Heart left ventricle (tissue), 16 donors: ENCODE measurements at regions of chr17 and their contacts with region 1.

Region 1: DNA sequence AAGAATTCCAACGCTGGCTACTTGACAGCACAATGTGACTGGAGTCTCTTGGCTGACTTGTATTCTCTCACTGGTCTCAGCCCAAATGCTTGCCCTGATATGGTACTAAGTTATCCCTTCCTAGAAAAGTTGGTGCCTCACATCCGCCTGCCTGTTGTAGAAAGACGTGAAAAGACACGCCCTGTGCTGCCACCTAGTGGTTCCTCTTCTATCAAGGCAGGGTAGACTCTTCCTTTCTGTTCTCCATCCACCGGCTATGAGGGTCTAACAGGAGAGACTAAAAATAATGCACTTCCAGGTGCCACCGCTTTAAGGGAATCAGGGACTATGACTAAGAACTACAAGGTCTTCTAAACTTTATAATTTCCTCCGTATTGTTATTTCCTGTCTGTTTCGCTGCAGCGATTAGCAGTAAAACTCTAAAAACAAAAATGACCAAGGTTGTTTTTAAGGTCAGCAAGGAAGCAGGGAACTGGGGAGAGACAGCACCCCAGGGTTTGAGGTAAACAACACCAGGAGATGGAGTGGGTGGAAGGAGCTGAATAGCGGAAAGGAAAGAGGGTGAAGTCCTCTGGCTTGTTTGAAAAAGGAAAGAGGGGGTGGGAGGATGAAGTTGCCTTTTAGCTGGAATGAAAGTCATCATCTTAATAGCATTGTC is 109.5 kb downstream of the YPEL2 start:
- DNase-seq: peak; percentile 79 to 95 (median 91)
- ATAC-seq: peak; percentile 86 to 96 (median 92)
- H3K4me3 ChIP-seq: peak overlapping the region in 4 of 12 donors; percentile 6 to 31 (median 17)
- H3K27ac ChIP-seq: peak overlapping the region; percentile 25 to 89 (median 73)
- H3K4me1 ChIP-seq: peaks cover 0 to 57% (median 30%) of the 10 kb centered on the region in 12 donors
- H3K27me3 ChIP-seq: no peaks in the 10 kb centered on the region
- CTCF ChIP-seq: peak; percentile 77 to 95 (median 87)
- POLR2A ChIP-seq: no peak

Region 2: GRCh38 chr17:59220376-59221158 is 220.3 kb before region 1 on chr17 and contains the start of gene GDPD1:
- intact Hi-C with region 1: loop called in 1 of 10 experiments (anchors 5 kb)
- DNase-seq: peak; percentile 94 to 99 (median 96)
- ATAC-seq: peak; percentile 95 to 99 (median 98)
- H3K4me3 ChIP-seq: peak within 1 kb of the TSS; percentile 64 to 96 (median 79)
- H3K27ac ChIP-seq: peak within 1 kb of the TSS in 11 of 12 donors; percentile 26 to 80 (median 69)
- H3K4me1 ChIP-seq: peaks cover 0 to 13% (median 0%) of the 10 kb centered on the region in 12 donors
- H3K27me3 ChIP-seq: no peaks in the 10 kb centered on the region
- CTCF ChIP-seq: peak; percentile 52 to 92 (median 72)
- POLR2A ChIP-seq: peak in 1 of 2 donors; percentile 49
- total RNA-seq, gene GDPD1: 0.75 to 4.0 (median 3.0) TPM

Region 3: DNA sequence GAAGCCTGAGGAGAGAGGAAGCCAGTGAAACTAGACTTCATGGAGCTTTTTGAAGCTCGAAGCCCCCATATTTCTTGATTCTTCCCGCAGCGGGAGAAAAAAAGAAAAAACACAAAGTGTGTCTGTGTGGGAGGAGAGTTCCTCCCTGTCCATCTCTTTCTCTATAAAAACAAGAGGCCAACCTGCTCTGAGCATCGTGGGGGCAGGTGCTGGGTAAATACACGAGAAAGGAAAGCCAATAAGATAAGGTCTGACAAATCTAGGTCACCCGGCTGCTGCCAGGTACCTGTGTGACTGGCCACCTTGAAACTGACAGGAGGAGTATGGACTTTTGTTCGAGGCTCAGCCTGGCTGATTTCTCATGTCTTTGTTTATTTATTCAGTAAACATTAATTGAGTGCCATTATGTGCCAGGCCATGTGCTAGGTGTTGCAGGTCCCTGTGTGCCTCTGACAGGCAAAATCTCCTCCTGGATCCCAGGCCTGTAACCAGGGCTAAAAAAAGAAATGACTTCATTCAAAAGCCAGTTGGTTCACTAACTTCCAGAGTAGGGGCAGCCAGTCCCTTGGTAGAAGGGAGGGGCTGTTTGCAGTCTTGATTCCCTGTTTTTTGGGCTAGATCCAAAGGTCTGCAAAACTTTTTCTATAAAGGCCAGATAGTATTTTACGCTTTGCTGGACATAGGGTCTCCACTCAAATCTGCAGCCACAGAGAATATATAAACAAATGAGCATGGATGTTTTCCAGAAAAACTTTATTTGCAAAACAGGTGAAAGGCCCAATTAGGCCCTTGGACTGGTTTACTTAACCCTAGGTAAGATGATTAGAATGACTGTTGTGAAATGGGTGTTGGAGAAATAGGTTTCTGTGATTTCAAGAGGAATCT is 73.9 kb before region 1 on chr17:
- intact Hi-C with region 1: loop called in 2 of 10 experiments (anchors 1 to 5 kb)
- DNase-seq: peak in 4 of 5 donors; percentile 55 to 70 (median 59)
- ATAC-seq: peak; percentile 69 to 84 (median 73)
- H3K4me3 ChIP-seq: peak overlapping the region in 4 of 12 donors; percentile 1 to 9 (median 6)
- H3K27ac ChIP-seq: peak overlapping the region; percentile 80 to 99 (median 94)
- H3K4me1 ChIP-seq: peaks cover 48 to 100% (median 99%) of the 10 kb centered on the region in 12 donors
- H3K27me3 ChIP-seq: no peaks in the 10 kb centered on the region
- CTCF ChIP-seq: no peak
- POLR2A ChIP-seq: no peak